Prostate gland (tissue), 2 donors: ENCODE measurements at regions of chr14 and their contacts with region 1.

Region 1: GRCh38 chr14:79712302-79712950 is 498.9 kb downstream of the DIO2 start:
- DNase-seq: no peak
- H3K4me3 ChIP-seq: no peak overlapping the region
- H3K27ac ChIP-seq: no peak overlapping the region
- H3K4me1 ChIP-seq: no peaks in the 10 kb centered on the region
- H3K27me3 ChIP-seq: no peaks in the 10 kb centered on the region
- CTCF ChIP-seq: no peak
- POLR2A ChIP-seq: no peak

Region 2: DNA sequence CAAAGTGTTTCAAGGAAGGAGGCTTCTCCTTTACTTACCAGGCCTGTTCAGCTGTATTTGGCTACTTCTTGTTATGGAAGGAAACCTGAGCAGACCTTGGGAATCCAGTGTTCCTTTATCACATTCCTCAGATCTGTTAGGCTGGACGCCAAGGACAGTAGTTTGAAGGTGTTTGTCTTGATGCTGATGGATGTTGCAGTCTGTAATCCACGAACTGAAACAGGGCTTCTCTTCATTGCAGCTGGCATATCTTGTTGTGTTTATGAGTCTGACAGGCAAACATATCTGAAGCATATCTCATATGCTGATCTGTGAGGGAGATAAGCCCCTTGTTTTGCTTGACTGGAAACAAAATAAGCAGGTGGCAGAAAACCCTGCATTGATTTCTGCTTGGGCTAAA is 637.9 kb before region 1 on chr14:
- intact Hi-C with region 1: loop called (anchors 5 kb)
- DNase-seq: peak; percentile 86
- H3K4me3 ChIP-seq: no peak overlapping the region
- H3K27ac ChIP-seq: no peak overlapping the region
- H3K4me1 ChIP-seq: peaks cover 3% of the 10 kb centered on the region
- H3K27me3 ChIP-seq: no peaks in the 10 kb centered on the region
- CTCF ChIP-seq: no peak
- POLR2A ChIP-seq: no peak